Right ventricle myocardium inferior (tissue), 1 donor: ENCODE measurements at regions of chr1 and their contacts with region 1.

Region 1: DNA sequence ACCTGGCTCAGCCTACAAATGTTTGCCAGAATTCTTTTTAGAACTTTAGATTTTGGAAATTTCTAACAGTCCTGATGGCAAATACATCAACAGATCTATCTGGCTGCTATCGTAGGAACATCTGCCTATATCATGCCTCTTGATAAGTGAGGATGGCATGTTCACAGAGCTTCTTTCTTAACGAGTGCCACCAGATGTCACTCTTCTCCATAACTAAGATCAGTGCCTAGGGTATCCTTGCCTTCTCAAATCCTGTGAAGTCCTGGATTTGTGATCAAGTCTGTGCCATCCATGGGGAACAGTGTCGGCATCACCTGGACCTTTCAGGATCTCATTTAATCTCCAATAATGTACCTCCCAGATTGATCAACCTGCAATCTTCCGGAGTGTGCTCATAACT is 36.5 kb upstream of the CD5L start:
- DNase-seq: no peak
- ATAC-seq: peak; percentile 57

Region 2: DNA sequence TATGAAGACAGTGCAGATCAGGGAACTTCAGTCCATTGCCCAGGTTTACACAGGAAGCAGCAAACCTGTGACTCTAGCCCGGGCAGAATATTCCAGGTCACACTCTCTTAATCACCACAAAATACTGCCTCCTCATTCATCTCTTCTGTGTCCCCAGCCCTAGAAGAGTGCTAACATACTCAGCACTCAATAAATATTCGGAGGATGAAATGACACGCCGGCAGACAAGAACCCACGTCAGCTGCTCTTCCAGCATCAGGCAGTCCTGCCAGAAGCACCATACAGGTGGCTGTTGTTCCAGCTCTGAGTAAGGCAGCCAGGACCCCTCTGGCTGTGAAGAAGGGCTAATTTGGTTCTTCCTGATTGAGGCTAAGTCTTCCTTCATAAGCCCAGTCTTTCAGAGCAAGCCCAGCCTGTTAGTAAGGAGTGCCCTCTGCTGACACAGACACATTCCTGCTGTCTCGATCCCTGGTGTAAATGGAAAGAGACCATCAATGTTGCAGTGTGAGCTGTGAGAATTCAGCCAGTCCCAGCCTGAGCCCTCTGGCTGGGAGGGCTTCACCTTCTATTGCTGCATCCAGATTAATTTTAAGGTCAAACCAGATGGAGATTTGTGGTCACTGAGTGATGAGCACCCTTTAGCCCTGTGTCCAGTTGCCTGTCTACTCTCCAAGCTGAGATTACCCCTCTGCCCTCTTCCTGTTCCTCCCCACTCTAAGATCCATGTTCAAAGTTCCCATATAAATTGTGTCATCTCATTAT is 70.4 kb after region 1 on chr1:
- intact Hi-C with region 1: loop called (anchors 1 kb)
- DNase-seq: no peak
- ATAC-seq: peak; percentile 90